Tibial artery (tissue), 4 donors: ENCODE measurements at regions of chr1 and their contacts with region 1.

Region 1: DNA sequence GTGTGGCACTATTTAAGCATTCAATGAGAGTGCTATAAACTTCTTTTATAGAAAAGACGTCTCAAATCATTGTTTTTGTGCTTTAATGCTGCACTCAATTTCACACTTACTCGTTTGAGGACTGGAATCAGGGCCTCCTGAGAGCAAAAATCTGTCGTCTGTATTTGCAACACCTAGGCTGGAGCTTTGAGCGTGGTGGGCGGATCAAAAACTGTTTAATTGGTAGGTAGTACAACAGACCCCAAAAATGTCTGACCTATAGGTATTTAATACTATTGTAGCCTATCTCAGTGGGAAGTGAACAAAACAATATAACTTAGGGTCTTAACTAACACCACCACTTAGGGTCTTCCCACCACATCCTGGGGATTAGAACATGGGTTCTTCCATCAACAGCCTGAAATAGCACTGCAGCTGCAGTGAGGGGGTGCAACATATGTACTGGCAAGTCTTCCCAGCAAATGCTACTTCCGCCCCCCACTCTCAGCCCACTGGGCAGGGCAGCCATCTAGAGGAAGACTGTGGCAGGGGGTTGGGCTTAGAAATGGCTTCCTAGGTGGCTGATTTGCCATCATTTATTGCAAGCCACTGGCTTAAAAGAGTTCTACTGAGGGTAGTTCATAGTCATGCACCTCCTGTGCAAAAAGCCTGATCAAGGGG is 48.3 kb downstream of the CD46 start:
- DNase-seq: peak in 1 of 2 donors; percentile 61
- H3K4me3 ChIP-seq: no peak overlapping the region
- H3K27ac ChIP-seq: no peak overlapping the region
- H3K4me1 ChIP-seq: peaks cover 0 to 17% (median 5%) of the 10 kb centered on the region in 4 donors
- H3K27me3 ChIP-seq: no peaks in the 10 kb centered on the region
- CTCF ChIP-seq: no peak

Region 2: DNA sequence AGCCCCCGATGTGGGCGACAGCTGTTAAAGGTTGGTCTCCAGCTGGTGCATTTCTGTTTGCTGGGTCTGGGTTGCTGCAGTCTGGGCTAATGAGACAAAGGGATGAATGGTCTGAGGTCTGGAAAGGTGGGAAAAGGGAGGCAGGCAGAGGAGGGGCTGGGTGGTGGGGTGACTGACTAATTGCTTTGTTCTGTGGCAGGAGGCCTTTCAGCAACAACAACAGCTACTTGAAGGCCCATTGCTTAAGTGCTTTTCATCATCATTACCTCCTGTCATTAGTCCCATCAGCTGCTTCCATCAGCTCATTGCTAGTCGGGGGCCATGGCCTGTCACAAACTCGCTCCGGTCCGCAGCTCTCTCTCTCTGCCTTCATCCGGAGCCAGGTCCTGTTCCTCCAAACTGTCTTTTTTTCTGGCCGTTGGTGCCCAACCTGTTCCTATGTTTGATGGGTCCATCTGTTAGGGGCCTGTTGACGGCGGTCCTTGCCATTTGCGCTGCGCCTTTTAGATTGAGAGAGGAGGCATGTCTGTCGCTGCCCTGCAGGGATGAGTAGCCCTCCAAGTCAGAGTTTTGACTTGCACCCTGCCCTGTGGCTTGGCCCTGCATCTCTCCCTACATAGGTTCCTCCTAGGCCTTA is 549.7 kb after region 1 on chr1:
- intact Hi-C with region 1: loop called (anchors 5 kb)
- DNase-seq: no peak
- H3K4me3 ChIP-seq: no peak overlapping the region
- H3K27ac ChIP-seq: no peak overlapping the region
- H3K4me1 ChIP-seq: peaks cover 0 to 5% (median 0%) of the 10 kb centered on the region in 4 donors
- H3K27me3 ChIP-seq: no peaks in the 10 kb centered on the region
- CTCF ChIP-seq: no peak